PC-9 (cell line): ENCODE measurements at regions of chr1 and their contacts with region 1.

Region 1: GRCh38 chr1:85259118-85259911 is at the start of gene C1orf52:
- DNase-seq: peak; percentile 80 to 95
- H3K4me3 ChIP-seq: peak within 1 kb of the TSS; percentile 82
- H3K27ac ChIP-seq: peak within 1 kb of the TSS; percentile 35; the same call in 1 of the 2 replicates
- H3K4me1 ChIP-seq: peaks cover 20% of the 10 kb centered on the region
- H3K27me3 ChIP-seq: no peaks in the 10 kb centered on the region
- CTCF ChIP-seq: peak; percentile 99
- total RNA-seq, gene C1orf52: 20.7 and 23.3 TPM in 2 replicates

Region 2: DNA sequence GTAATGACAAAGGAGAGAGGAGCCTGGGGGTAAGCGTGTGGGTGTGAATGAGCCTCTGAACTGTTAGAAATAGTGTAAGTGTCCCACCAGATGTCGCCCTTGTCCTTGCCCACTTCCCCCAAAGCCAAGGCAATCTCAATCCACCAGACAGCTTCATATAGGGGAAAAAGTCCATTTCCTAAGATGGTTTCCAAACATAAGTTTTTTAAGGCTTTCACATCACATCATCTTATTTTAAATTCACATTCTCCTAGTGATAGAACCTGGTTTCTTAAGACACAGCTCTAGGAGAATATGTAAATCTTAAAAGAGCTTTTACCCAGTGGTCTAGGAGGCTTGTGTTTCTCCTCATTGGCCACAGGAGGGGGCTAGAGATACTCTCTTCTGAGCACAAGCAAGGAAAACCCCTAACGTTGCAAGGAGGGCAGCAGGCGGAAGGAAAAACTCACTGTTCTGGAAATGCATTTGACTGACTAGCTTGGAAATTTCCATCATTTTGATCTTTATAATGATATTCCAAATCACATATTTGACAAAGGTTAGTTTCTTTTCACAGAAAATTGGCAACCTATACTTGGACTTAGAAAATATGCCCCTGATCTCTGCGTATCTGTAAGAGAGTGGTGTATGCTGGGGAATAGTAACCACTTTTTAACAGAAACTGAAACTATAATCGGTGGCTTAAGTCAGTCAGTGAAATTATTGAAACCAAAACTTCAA is 314.4 kb before region 1 on chr1:
- CTCF ChIA-PET with region 1: interaction called, 17 read pairs
- POLR2A ChIA-PET with region 1: no interaction called
- intact Hi-C with region 1: loop called (anchors 1 kb)
- DNase-seq: peak; percentile 61 to 79
- H3K4me3 ChIP-seq: peak overlapping the region; percentile 47; the same call in 1 of the 2 replicates
- H3K27ac ChIP-seq: 0 out of 2 replicates have a peak overlapping the region, but pooled peaks have one; percentile 17
- H3K4me1 ChIP-seq: peaks cover 10% of the 10 kb centered on the region; the same call in 1 of the 2 replicates
- H3K27me3 ChIP-seq: no peaks in the 10 kb centered on the region
- CTCF ChIP-seq: peak; percentile 96

Region 3: GRCh38 chr1:85109475-85109874 is 149.8 kb before region 1 on chr1:
- CTCF ChIA-PET with region 1: interaction called, 16 read pairs
- POLR2A ChIA-PET with region 1: no interaction called
- intact Hi-C with region 1: loop called (anchors 1 kb)
- DNase-seq: peak; percentile 40 to 62
- H3K4me3 ChIP-seq: no peak overlapping the region
- H3K27ac ChIP-seq: no peak overlapping the region
- H3K4me1 ChIP-seq: no peaks in the 10 kb centered on the region
- H3K27me3 ChIP-seq: no peaks in the 10 kb centered on the region
- CTCF ChIP-seq: peak; percentile 91

Region 4: GRCh38 chr1:85200870-85201339 is 58.4 kb before region 1 on chr1 and contains the start of gene SYDE2:
- CTCF ChIA-PET with region 1: interaction called, 5 read pairs
- POLR2A ChIA-PET with region 1: interaction called, 12 read pairs
- intact Hi-C with region 1: loop called (anchors 5 kb)
- DNase-seq: peak; percentile 72 to 90
- H3K4me3 ChIP-seq: peak within 1 kb of the TSS; percentile 94
- H3K27ac ChIP-seq: peak within 1 kb of the TSS; percentile 84
- H3K4me1 ChIP-seq: peaks cover 62% of the 10 kb centered on the region
- H3K27me3 ChIP-seq: no peaks in the 10 kb centered on the region
- CTCF ChIP-seq: no peak
- total RNA-seq, gene SYDE2: 8.9 and 10.3 TPM in 2 replicates

Region 5: GRCh38 chr1:85297855-85298629 is 38.7 kb after region 1 on chr1:
- CTCF ChIA-PET with region 1: interaction called, 3 read pairs
- POLR2A ChIA-PET with region 1: interaction called, 3 read pairs
- intact Hi-C with region 1: loop called (anchors 1 kb)
- DNase-seq: peak; percentile 75 to 100
- H3K4me3 ChIP-seq: peak overlapping the region; percentile 35; the same call in 1 of the 2 replicates
- H3K27ac ChIP-seq: peak overlapping the region; percentile 93
- H3K4me1 ChIP-seq: peaks cover 62% of the 10 kb centered on the region
- H3K27me3 ChIP-seq: no peaks in the 10 kb centered on the region
- CTCF ChIP-seq: no peak

Region 6: DNA sequence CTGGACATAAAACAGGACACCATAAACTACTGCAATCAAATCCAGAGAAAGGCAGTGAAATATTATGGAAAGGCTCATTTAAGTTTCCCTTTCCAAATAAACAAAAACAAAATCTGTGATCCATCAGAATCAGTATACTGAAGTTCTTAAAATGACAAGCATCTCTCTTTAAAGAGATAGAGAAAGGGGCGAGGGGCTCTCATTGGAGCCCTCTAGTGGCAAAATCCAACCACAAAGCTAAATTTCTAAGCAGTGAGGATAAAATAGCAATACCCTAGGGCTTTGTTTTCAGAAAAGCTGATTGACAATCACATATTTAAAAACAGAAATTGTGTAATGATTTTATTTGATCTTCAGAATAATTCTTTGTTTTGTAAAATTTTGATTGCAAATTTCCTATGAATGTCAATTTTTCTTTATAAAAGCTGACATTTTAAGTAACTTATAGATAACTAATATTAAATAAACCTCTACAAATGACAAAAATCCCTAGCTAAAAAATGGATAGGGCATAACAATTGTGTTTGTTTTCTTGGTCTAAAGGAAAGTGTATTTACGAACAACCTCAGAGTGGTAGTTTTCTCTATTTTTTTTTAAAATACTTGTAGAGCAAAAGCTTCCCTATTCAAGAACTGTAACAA is 759.1 kb after region 1 on chr1:
- CTCF ChIA-PET with region 1: interaction called, 14 read pairs
- POLR2A ChIA-PET with region 1: no interaction called
- intact Hi-C with region 1: no loop called
- DNase-seq: peak in 1 of 2 experiments; percentile 3
- H3K4me3 ChIP-seq: no peak overlapping the region
- H3K27ac ChIP-seq: no peak overlapping the region
- H3K4me1 ChIP-seq: no peaks in the 10 kb centered on the region
- H3K27me3 ChIP-seq: no peaks in the 10 kb centered on the region
- CTCF ChIP-seq: peak; percentile 85